ENCODE measurements at regions of chr3 and their contacts with region 1.

Region 1: GRCh38 chr3:39177708-39178332 is 14.6 kb downstream of the XIRP1 start:
- DNase-seq: peak; percentile 86
- H3K4me3 ChIP-seq: peak overlapping the region; percentile 62
- H3K27ac ChIP-seq: peak overlapping the region; percentile 90
- H3K27me3 ChIP-seq: no peaks in the 10 kb centered on the region
- CTCF ChIP-seq: no peak

Region 2: GRCh38 chr3:39118079-39118478 is 59.7 kb before region 1 on chr3:
- CTCF ChIA-PET with region 1: no interaction called
- POLR2A ChIA-PET with region 1: no interaction called
- DNase-seq: no peak
- H3K4me3 ChIP-seq: no peak overlapping the region
- H3K27ac ChIP-seq: no peak overlapping the region
- H3K27me3 ChIP-seq: no peaks in the 10 kb centered on the region
- CTCF ChIP-seq: no peak

Region 3: GRCh38 chr3:39166134-39166731 is 11.6 kb before region 1 on chr3:
- CTCF ChIA-PET with region 1: interaction called, 3 read pairs
- POLR2A ChIA-PET with region 1: interaction called, 27 read pairs
- DNase-seq: no peak
- H3K4me3 ChIP-seq: no peak overlapping the region
- H3K27ac ChIP-seq: peak overlapping the region; percentile 12
- H3K27me3 ChIP-seq: no peaks in the 10 kb centered on the region
- CTCF ChIP-seq: no peak